ENCODE measurements at regions of chr10 and their contacts with region 1.

Region 1: DNA sequence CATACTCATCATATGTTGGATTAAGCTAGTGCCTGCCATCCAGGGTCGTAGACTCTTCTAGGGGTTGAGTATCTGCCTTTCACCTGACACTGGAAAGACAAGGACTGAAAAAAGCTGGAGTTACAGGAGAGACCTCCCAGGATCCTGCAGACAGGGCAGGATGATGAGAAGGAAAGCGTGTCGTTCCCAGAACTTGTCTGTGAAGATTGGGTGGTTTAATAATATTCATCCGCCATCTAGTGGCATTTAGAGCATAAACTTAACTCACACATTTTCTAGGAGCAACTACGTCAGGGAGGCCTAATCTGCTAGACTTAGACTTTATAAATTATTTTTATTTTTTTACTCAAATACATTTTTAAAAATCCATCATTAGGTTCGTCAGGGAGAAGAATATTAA is 59.6 kb downstream of the ADRB1 start:
- DNase-seq: peak; percentile 68
- H3K4me3 ChIP-seq: no peak overlapping the region
- H3K27ac ChIP-seq: no peak overlapping the region
- H3K4me1 ChIP-seq: peaks cover 0 to 10% of the 10 kb centered on the region in 2 experiments; a peak in 1 of 4 replicates
- H3K27me3 ChIP-seq: peaks cover 8% of the 10 kb centered on the region
- CTCF ChIP-seq: peak; percentile 69
- EP300 ChIP-seq: no peak
- RAD21 ChIP-seq: peak; percentile 90

Region 2: DNA sequence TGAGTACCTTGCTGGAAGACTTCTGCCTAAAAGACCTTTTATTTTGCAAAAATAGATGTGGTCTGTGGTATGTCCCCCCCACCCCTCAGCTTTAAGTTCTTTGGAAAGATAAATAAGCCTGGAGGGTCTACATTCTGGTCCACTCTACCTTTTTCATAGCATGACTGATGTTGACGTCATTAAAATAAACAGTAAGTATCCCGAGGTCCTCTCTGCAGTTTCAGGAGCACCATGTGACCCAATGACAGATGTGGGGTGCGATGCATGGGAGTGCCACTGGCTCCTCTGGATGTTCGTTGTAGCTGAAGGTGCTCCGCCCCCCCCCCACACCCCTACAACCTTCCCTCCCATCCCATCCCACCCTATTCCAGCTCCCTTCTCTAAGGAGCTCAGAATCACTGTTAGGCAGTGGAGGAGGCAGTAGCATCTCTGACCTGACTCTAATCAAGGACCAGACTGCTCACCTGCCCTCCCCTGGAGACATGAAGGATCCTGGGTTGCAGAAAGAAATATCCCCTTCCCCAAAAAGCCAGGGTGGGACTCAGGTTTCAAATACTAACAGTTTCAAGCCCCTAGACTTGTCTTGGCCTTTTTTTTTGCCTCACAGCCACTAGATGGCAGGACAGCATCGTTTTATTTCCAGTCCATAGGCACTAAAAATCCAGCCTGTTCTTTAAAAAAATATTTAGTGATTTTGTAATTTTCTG is 398.5 kb before region 1 on chr10:
- CTCF ChIA-PET with region 1: interaction called, 36 read pairs
- POLR2A ChIA-PET with region 1: no interaction called
- DNase-seq: peak; percentile 46
- H3K4me3 ChIP-seq: peak overlapping the region in 1 of 2 experiments; percentile 30; a peak in 1 of 4 replicates
- H3K27ac ChIP-seq: no peak overlapping the region
- H3K4me1 ChIP-seq: peaks cover 0 to 22% of the 10 kb centered on the region in 2 experiments; a peak in 2 of 4 replicates
- H3K27me3 ChIP-seq: no peaks in the 10 kb centered on the region
- CTCF ChIP-seq: peak; percentile 85
- EP300 ChIP-seq: no peak
- RAD21 ChIP-seq: peak; percentile 76

Region 3: DNA sequence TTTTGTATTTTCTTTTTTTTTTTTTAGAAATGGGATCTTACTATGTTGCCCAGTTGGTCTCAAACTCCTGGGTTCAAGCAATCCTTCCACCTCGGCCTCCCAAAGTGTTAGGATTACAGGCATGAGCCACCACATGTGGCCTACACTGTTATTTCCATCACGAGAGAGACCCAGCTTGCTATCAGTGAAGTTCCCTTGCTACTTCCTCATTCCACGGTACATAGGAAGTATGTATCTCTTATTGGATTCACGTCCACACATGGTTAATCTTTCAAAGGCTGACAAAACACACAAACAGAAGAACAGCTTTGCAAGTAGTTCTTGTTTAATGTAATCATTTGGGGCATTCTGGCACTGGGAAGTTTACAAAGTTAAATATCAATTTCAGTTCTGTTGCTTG is 300.3 kb before region 1 on chr10:
- CTCF ChIA-PET with region 1: interaction called, 125 read pairs
- POLR2A ChIA-PET with region 1: no interaction called
- DNase-seq: no peak
- H3K4me3 ChIP-seq: no peak overlapping the region
- H3K27ac ChIP-seq: no peak overlapping the region
- H3K4me1 ChIP-seq: no peaks in the 10 kb centered on the region
- H3K27me3 ChIP-seq: peaks cover 7% of the 10 kb centered on the region; the same call in 1 of the 2 replicates
- CTCF ChIP-seq: no peak
- EP300 ChIP-seq: no peak
- RAD21 ChIP-seq: no peak

Region 4: GRCh38 chr10:114087255-114087654 is 16.0 kb before region 1 on chr10:
- CTCF ChIA-PET with region 1: interaction called, 16 read pairs
- POLR2A ChIA-PET with region 1: no interaction called
- DNase-seq: no peak
- H3K4me3 ChIP-seq: no peak overlapping the region
- H3K27ac ChIP-seq: no peak overlapping the region
- H3K4me1 ChIP-seq: no peaks in the 10 kb centered on the region
- H3K27me3 ChIP-seq: no peaks in the 10 kb centered on the region
- CTCF ChIP-seq: no peak
- EP300 ChIP-seq: no peak
- RAD21 ChIP-seq: no peak

Region 5: GRCh38 chr10:114115661-114116445 is 12.6 kb after region 1 on chr10:
- CTCF ChIA-PET with region 1: interaction called, 15 read pairs
- POLR2A ChIA-PET with region 1: no interaction called
- DNase-seq: no peak
- H3K4me3 ChIP-seq: no peak overlapping the region
- H3K27ac ChIP-seq: no peak overlapping the region
- H3K4me1 ChIP-seq: peaks cover 0 to 7% of the 10 kb centered on the region in 2 experiments; a peak in 2 of 4 replicates
- H3K27me3 ChIP-seq: no peaks in the 10 kb centered on the region; the same call in 1 of the 2 replicates
- CTCF ChIP-seq: no peak
- EP300 ChIP-seq: no peak
- RAD21 ChIP-seq: no peak

Measured in SK-N-SH (cell line).